Natural killer cell (primary cell): ENCODE measurements at regions of chr17 and their contacts with region 1.

Region 1: DNA sequence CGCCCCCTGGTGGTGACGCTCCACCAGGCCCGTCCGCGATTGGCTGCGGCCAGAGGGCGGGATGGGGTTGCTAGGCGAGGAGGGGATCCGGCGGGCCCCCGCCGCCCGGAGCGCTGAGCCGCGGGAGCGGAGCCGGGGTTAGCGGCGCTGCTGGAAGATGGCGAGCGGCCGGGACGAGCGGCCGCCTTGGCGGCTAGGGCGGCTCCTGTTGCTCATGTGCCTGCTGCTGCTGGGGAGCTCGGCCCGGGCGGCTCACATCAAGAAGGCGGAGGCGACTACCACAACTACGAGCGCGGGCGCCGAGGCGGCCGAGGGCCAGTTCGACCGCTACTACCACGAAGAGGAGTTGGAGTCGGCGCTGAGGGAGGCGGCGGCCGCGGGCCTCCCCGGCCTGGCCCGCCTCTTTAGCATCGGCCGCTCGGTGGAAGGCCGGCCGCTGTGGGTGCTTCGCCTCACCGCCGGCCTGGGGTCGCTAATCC is at the start of gene CPD:
- DNase-seq: peak; percentile 98
- ATAC-seq: peak; percentile 90 to 97 (median 92)
- H3K4me3 ChIP-seq: peak within 1 kb of the TSS; percentile 83
- H3K4me3 Mint-ChIP-seq: peak within 1 kb of the TSS; percentile 93
- H3K27ac ChIP-seq: peak within 1 kb of the TSS; percentile 81
- H3K27ac Mint-ChIP-seq: peak within 1 kb of the TSS; percentile 83 to 93
- H3K4me1 ChIP-seq: peaks cover 21% of the 10 kb centered on the region
- H3K4me1 Mint-ChIP-seq: peaks cover 54 to 59% of the 10 kb centered on the region in 2 donors
- H3K27me3 ChIP-seq: no peaks in the 10 kb centered on the region
- H3K27me3 Mint-ChIP-seq: peaks cover 0 to 6% of the 10 kb centered on the region in 2 donors
- CTCF ChIP-seq: no peak
- total RNA-seq, gene CPD: 67.3 to 94.5 (median 85.9) TPM

Region 2: GRCh38 chr17:30291543-30292285 is 87.1 kb before region 1 on chr17 and contains the start of gene BLMH:
- intact Hi-C with region 1: loop called (anchors 5 kb)
- DNase-seq: peak; percentile 79 to 87
- ATAC-seq: peak; percentile 94 to 95 (median 94)
- H3K4me3 ChIP-seq: peak within 1 kb of the TSS; percentile 63
- H3K4me3 Mint-ChIP-seq: peak within 1 kb of the TSS; percentile 85
- H3K27ac ChIP-seq: peak within 1 kb of the TSS; percentile 42
- H3K27ac Mint-ChIP-seq: peak within 1 kb of the TSS in 1 of 2 donors; percentile 41
- H3K4me1 ChIP-seq: peaks cover 9% of the 10 kb centered on the region
- H3K4me1 Mint-ChIP-seq: peaks cover 12 to 13% of the 10 kb centered on the region in 2 donors
- H3K27me3 ChIP-seq: no peaks in the 10 kb centered on the region
- H3K27me3 Mint-ChIP-seq: no peaks in the 10 kb centered on the region
- CTCF ChIP-seq: no peak
- total RNA-seq, gene BLMH: 44.8 to 52.8 (median 46.7) TPM

Region 3: DNA sequence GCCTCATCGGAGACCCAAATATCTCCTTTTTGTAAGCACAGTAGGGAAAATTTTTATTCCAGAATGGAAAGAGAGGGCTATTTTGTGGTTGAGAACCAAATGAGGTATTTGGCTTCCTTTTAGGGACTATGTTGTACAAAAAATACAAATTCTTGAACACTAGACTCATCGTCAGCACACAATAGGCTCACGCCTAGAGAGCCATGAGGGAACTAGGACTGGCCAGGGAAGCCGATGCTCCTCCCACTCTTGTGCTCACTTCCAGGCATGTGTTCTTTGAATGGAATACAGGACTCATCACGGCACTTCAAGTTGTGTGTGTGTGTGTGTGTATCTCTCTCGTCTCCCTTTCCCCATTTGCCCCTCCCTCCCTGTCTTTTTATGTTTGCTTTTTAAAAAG is 69.3 kb before region 1 on chr17:
- intact Hi-C with region 1: no loop called
- DNase-seq: no peak
- ATAC-seq: no peak
- H3K4me3 ChIP-seq: no peak overlapping the region
- H3K4me3 Mint-ChIP-seq: no peak overlapping the region
- H3K27ac ChIP-seq: no peak overlapping the region
- H3K27ac Mint-ChIP-seq: no peak overlapping the region
- H3K4me1 ChIP-seq: no peaks in the 10 kb centered on the region
- H3K4me1 Mint-ChIP-seq: no peaks in the 10 kb centered on the region
- H3K27me3 ChIP-seq: no peaks in the 10 kb centered on the region
- H3K27me3 Mint-ChIP-seq: peaks cover 0 to 2% of the 10 kb centered on the region in 2 donors
- CTCF ChIP-seq: no peak

Region 4: GRCh38 chr17:30363715-30364202 is 15.1 kb before region 1 on chr17:
- intact Hi-C with region 1: loop called (anchors 1 kb)
- DNase-seq: peak; percentile 66 to 90
- ATAC-seq: peak; percentile 84 to 93 (median 90)
- H3K4me3 ChIP-seq: no peak overlapping the region
- H3K4me3 Mint-ChIP-seq: peak overlapping the region; percentile 76
- H3K27ac ChIP-seq: no peak overlapping the region
- H3K27ac Mint-ChIP-seq: peak overlapping the region; percentile 85 to 89
- H3K4me1 ChIP-seq: peaks cover 30% of the 10 kb centered on the region
- H3K4me1 Mint-ChIP-seq: peaks cover 43% of the 10 kb centered on the region in 2 donors
- H3K27me3 ChIP-seq: no peaks in the 10 kb centered on the region
- H3K27me3 Mint-ChIP-seq: no peaks in the 10 kb centered on the region
- CTCF ChIP-seq: no peak

Region 5: GRCh38 chr17:30503558-30503957 is 124.7 kb after region 1 on chr17:
- intact Hi-C with region 1: no loop called
- DNase-seq: no peak
- ATAC-seq: no peak
- H3K4me3 ChIP-seq: no peak overlapping the region
- H3K4me3 Mint-ChIP-seq: no peak overlapping the region
- H3K27ac ChIP-seq: no peak overlapping the region
- H3K27ac Mint-ChIP-seq: no peak overlapping the region
- H3K4me1 ChIP-seq: no peaks in the 10 kb centered on the region
- H3K4me1 Mint-ChIP-seq: peaks cover 11 to 16% of the 10 kb centered on the region in 2 donors
- H3K27me3 ChIP-seq: no peaks in the 10 kb centered on the region
- H3K27me3 Mint-ChIP-seq: no peaks in the 10 kb centered on the region
- CTCF ChIP-seq: no peak

Region 6: GRCh38 chr17:30554839-30555751 is 176.2 kb after region 1 on chr17:
- intact Hi-C with region 1: no loop called
- DNase-seq: no peak
- ATAC-seq: no peak
- H3K4me3 ChIP-seq: no peak overlapping the region
- H3K4me3 Mint-ChIP-seq: no peak overlapping the region
- H3K27ac ChIP-seq: no peak overlapping the region
- H3K27ac Mint-ChIP-seq: no peak overlapping the region
- H3K4me1 ChIP-seq: peaks cover 21% of the 10 kb centered on the region
- H3K4me1 Mint-ChIP-seq: peaks cover 0 to 12% of the 10 kb centered on the region in 2 donors
- H3K27me3 ChIP-seq: no peaks in the 10 kb centered on the region
- H3K27me3 Mint-ChIP-seq: no peaks in the 10 kb centered on the region
- CTCF ChIP-seq: no peak